WTC11 (cell line): ENCODE measurements at regions of chr17 and their contacts with region 1.

Region 1: DNA sequence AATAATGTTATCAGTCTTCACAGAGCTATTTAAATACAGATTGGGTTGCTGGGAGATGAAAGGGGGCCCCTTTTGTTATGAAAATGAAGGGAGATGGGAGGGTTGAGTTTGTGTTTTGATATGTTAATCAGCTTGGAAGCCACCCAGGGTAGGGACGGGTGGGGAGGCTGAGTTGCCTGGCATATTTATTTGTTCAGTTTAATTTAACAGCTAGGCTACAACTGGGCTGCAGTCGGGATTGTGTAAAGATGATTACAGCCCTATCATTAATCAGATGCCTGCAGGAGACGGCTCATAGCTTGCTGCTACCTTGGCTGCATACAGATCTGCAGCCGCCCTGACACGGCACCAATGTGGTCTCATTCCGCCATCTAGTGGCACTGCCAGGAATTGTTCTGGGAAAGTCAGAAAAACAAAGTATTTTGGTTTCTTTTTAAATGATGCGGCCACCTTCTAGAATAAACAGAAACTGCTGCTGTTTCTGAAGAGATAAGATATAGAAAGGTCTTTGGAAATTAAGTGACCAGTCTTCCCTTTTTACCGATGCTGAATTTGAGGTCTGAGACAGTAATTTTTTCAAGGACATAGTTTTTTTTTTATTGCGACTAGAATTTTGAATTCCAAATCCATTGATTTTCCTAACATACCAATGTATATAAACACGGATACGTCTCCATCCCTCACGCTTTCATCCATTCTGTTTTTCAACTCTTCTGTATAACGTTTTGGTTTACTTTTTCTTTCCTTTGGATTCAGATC is 458.0 kb upstream of the ASIC2 start:
- DNase-seq: peak; percentile 78
- ATAC-seq: peak; percentile 88
- H3K4me3 Mint-ChIP-seq: peak overlapping the region; percentile 68
- H3K27ac Mint-ChIP-seq: peak overlapping the region; percentile 85
- H3K4me1 Mint-ChIP-seq: peaks cover 38% of the 10 kb centered on the region
- H3K27me3 Mint-ChIP-seq: peaks cover 92% of the 10 kb centered on the region
- CTCF ChIP-seq: peak; percentile 93

Region 2: DNA sequence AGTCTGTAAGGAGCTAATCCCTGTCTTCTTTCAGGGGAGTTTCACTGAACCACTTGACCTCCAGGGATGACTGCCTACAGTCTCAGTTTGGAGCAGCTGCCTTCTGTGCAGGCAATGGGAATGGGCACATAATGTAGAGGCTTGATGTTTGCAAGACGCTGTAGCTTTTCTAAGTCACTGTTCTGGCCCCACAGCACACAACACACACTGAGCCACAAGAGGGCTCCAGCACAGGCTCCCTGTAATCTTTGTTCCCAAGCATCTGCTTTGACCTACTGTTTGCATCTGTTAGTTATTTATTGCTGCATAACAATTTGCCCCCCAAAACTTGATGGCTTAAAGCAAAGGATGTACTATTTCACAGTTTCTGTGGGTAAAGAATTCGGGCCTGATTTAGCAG is 39.0 kb before region 1 on chr17:
- CTCF ChIA-PET with region 1: interaction called, 25 read pairs
- POLR2A ChIA-PET with region 1: no interaction called
- DNase-seq: peak; percentile 23
- ATAC-seq: peak; percentile 74
- H3K4me3 Mint-ChIP-seq: no peak overlapping the region
- H3K27ac Mint-ChIP-seq: no peak overlapping the region
- H3K4me1 Mint-ChIP-seq: no peaks in the 10 kb centered on the region
- H3K27me3 Mint-ChIP-seq: peaks cover 57% of the 10 kb centered on the region
- CTCF ChIP-seq: no peak

Region 3: DNA sequence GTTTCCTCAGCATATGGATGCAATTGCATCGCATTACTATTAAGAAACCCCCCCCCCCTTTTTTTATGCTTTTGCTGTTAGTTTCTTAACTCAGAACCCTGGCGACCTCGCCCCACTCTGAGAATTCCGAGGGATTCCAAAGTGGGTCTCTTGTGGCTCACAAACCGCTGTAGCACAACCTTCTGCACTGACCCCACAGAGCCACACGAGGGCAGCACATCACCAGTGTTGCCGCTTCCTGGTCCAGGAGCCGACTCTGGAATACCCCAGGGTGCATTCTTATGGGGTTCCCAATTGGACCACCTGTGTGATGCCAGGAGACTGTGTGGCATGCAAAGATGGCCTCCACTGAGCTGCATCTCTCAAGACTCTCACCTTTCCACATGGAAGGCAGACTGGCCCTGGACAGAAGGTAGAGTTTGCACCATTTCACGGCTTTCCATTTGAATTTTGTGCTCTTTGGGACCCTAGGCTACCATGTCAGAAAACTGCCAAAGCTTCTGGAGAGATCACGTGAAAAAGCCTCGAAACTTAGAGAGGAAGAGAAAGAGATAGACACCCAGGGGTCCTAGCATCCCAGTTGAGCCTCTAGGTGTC is 25.3 kb before region 1 on chr17:
- CTCF ChIA-PET with region 1: interaction called, 73 read pairs
- POLR2A ChIA-PET with region 1: no interaction called
- DNase-seq: peak; percentile 80
- ATAC-seq: peak; percentile 86
- H3K4me3 Mint-ChIP-seq: no peak overlapping the region
- H3K27ac Mint-ChIP-seq: no peak overlapping the region
- H3K4me1 Mint-ChIP-seq: peaks cover 3% of the 10 kb centered on the region; the same call in 1 of the 2 replicates
- H3K27me3 Mint-ChIP-seq: peaks cover 82% of the 10 kb centered on the region
- CTCF ChIP-seq: peak; percentile 72

Region 4: DNA sequence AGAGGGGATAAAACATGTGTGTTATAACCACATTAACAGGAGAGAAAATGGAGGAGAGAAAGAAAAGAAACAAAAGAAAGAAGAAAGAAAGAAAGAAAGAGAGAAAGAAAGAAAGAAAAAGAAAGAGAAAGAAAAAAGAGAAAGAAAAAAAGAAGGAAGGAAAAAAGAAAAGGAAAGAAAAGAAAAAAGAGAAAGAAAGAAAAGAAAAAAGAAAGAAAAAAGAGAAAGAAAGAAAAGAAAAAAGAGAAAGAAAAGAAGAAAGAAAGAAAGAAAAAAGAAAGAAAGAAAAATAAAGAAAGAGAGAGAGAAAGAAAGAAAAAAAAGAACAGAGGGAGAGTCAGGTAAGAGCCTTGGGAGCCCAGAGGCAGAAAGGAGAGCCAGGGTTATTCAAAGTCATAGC is 11.4 kb before region 1 on chr17:
- CTCF ChIA-PET with region 1: interaction called, 29 read pairs
- POLR2A ChIA-PET with region 1: no interaction called
- DNase-seq: no peak
- ATAC-seq: no peak
- H3K4me3 Mint-ChIP-seq: no peak overlapping the region
- H3K27ac Mint-ChIP-seq: no peak overlapping the region
- H3K4me1 Mint-ChIP-seq: 0 out of 2 replicates have a peak, but pooled peaks cover 1% of the 10 kb centered on the region
- H3K27me3 Mint-ChIP-seq: peaks cover 56% of the 10 kb centered on the region
- CTCF ChIP-seq: no peak

Region 5: GRCh38 chr17:33838281-33838680 is 87.2 kb after region 1 on chr17:
- CTCF ChIA-PET with region 1: no interaction called
- POLR2A ChIA-PET with region 1: no interaction called
- DNase-seq: no peak
- ATAC-seq: no peak
- H3K4me3 Mint-ChIP-seq: no peak overlapping the region
- H3K27ac Mint-ChIP-seq: no peak overlapping the region
- H3K4me1 Mint-ChIP-seq: no peaks in the 10 kb centered on the region
- H3K27me3 Mint-ChIP-seq: no peaks in the 10 kb centered on the region
- CTCF ChIP-seq: no peak